ENCODE measurements at regions of chr1 and their contacts with region 1.

Region 1: DNA sequence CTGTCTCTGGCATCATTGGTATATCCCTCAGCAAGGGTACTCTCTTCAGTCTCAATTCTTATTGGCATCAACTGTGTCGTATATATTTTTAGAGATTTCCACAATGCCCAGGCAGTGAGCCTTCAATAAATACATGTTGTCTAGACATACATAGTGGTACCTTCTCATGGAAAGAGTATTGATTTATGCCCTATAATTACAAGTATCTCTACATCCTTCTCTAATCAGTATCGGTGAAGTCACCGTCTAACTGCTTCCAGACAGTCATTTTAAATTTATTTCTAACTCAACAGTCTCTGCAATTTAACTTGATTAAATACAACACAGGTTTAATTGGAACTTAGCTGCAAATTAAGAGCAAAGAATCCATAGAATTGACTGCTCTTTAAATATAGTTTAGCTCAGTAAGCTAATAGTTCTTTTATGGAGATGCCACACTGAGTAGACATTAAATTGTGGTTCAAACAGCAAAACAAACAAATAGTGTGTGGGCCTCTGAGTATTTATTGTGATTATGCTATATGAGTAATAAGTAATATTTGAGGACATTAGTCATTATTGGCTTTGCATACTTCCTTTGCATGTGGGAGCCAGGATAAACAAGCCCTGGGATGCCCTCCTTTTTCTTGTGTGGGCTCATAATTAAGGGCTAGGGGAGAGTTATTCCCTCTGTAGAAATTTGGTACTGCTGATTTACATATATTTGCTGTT is 126.9 kb upstream of the DUSP10 start:
- DNase-seq: no peak
- H3K4me3 ChIP-seq: no peak overlapping the region
- H3K27ac ChIP-seq: no peak overlapping the region
- H3K4me1 ChIP-seq: no peaks in the 10 kb centered on the region
- H3K27me3 ChIP-seq: no peaks in the 10 kb centered on the region
- CTCF ChIP-seq: no peak
- POLR2A ChIP-seq: no peak

Region 2: GRCh38 chr1:221753828-221754188 is 114.9 kb before region 1 on chr1:
- intact Hi-C with region 1: loop called (anchors 5 kb)
- DNase-seq: no peak
- H3K4me3 ChIP-seq: no peak overlapping the region
- H3K27ac ChIP-seq: no peak overlapping the region
- H3K4me1 ChIP-seq: no peaks in the 10 kb centered on the region
- H3K27me3 ChIP-seq: no peaks in the 10 kb centered on the region
- CTCF ChIP-seq: no peak
- POLR2A ChIP-seq: no peak

Measured in vagina (tissue), 2 donors.